Gastrocnemius medialis (tissue), 4 donors: ENCODE measurements at regions of chr12 and their contacts with region 1.

Region 1: DNA sequence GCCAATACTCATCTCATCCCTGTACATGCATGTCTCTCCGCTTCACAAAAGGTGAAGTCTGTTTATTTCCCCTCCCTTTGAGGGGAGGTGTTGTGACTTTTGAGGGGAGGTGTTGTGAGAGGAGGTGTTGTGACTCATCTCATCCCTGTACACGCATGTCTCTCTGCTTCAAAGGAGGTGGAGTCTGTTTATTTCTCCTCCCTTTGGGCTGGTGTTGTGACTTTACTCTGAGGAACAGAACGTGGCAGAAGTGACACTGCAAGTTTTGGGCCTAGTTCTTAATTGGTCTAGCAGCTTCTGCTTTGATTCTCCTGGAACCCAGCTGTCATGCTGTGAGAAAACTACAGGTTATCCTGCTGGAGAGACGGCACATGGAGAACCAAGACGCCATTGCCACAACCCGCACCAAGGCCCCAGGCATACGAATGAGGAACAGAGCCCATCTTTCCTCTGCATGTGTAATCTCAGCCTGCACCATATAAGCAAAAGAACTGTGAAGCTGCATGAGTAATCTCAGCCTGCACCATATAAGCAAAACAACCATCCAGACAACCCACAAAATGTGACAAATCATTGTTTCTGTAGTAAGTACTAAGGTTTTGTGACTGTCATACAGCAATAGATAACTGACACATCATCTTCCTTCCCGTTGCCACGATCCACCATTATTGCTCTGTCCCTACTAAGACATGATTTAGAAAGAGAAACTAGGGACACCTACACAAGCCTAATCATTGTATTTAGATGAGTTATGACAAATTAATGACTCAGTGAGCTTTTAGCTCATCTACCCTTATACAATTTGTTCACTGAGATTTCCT is 30.0 kb downstream of the GALNT4 start:
- DNase-seq: no peak
- ATAC-seq: no peak
- H3K4me3 ChIP-seq: no peak overlapping the region
- H3K27ac ChIP-seq: no peak overlapping the region
- H3K4me1 ChIP-seq: no peaks in the 10 kb centered on the region
- H3K27me3 ChIP-seq: no peaks in the 10 kb centered on the region
- CTCF ChIP-seq: no peak
- POLR2A ChIP-seq: no peak

Region 2: DNA sequence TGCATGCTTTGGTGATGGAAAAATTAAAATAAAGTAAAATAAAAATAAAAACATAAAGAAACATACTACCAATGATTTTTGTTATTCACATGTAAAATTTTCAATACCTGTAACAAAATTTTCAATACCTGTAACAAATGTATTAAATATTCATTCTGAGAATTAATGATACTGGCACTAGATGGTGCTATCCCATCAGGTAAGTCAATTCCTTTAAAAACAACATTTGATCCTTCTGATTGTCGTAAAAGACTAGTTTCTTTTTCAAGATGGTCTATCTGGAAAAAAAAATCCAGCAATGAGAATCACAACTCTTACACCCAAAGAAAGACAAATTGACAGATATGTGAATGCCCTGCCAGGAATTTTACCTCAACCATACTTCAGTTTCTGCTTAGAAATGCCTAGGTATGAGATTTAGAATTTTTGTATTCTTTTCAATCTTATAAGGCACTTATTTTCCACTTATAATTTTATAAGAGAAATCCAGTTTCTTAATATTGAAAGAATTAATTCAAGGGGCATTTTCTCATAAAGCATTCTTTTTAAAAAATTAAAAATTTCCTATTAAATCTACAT is 1383.5 kb before region 1 on chr12:
- in situ Hi-C with region 1: loop called in 1 of 4 experiments (anchors 25 kb)
- intact Hi-C with region 1: no loop called
- DNase-seq: no peak
- ATAC-seq: no peak
- H3K4me3 ChIP-seq: peak overlapping the region in 2 of 4 donors; percentile 14 to 29
- H3K27ac ChIP-seq: no peak overlapping the region
- H3K4me1 ChIP-seq: no peaks in the 10 kb centered on the region
- H3K27me3 ChIP-seq: no peaks in the 10 kb centered on the region
- CTCF ChIP-seq: peak in 3 of 5 experiments; percentile 16 to 37 (median 35)
- POLR2A ChIP-seq: no peak

Region 3: DNA sequence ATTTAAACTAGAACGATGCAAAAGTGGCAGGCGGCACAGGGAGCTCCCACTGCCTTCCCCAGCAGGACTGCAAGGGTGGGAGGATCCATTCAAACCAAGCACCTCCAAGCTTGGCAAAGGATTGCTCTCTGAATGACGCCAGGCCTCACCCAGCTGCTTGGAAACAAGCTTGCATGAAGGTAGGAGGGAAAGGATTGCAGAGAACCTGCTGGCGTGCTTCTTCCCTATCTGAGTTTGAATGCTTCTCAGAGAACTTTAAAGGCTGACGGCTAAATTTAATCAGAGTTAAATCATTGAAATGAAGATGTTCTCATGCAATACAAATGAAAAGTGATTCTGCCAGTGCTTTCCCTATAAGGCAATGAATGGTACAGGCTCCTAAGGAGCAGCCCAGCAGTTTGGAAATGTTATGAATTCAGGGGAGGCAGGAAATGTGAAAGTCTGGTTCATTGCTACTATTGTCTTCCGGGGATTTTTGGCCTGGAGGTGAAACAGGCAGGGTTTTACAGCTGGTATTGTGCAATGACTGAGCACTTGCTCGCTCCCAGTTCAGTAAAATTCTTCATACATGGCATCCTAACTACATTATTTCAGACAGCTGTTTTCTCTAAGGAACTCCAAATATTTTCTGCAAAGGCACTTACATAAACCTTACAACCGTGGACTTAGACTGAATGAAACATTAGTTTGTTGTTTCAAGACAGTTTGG is 110.4 kb before region 1 on chr12:
- in situ Hi-C with region 1: no loop called
- intact Hi-C with region 1: no loop called
- DNase-seq: peak; percentile 23 to 26
- ATAC-seq: peak; percentile 66 to 71
- H3K4me3 ChIP-seq: no peak overlapping the region
- H3K27ac ChIP-seq: peak overlapping the region in 1 of 4 donors; percentile 24
- H3K4me1 ChIP-seq: peaks cover 5% of the 10 kb centered on the region in 2 donors
- H3K27me3 ChIP-seq: no peaks in the 10 kb centered on the region
- CTCF ChIP-seq: no peak
- POLR2A ChIP-seq: no peak